ENCODE measurements at regions of chr5 and their contacts with region 1.

Region 1: GRCh38 chr5:135887351-135887864 is 8.2 kb downstream of the IL9 start:
- DNase-seq: peak; percentile 72
- ATAC-seq: peak; percentile 86
- H3K4me3 Mint-ChIP-seq: no peak overlapping the region
- H3K27ac Mint-ChIP-seq: no peak overlapping the region
- H3K4me1 Mint-ChIP-seq: peaks cover 6% of the 10 kb centered on the region
- H3K27me3 Mint-ChIP-seq: peaks cover 19% of the 10 kb centered on the region
- CTCF ChIP-seq: peak; percentile 78

Region 2: GRCh38 chr5:135913713-135914626 is 26.6 kb after region 1 on chr5:
- CTCF ChIA-PET with region 1: no interaction called
- POLR2A ChIA-PET with region 1: no interaction called
- intact Hi-C with region 1: no loop called
- DNase-seq: peak; percentile 20
- ATAC-seq: peak; percentile 65
- H3K4me3 Mint-ChIP-seq: no peak overlapping the region
- H3K27ac Mint-ChIP-seq: no peak overlapping the region
- H3K4me1 Mint-ChIP-seq: peaks cover 3% of the 10 kb centered on the region
- H3K27me3 Mint-ChIP-seq: peaks cover 47% of the 10 kb centered on the region
- CTCF ChIP-seq: no peak

Region 3: DNA sequence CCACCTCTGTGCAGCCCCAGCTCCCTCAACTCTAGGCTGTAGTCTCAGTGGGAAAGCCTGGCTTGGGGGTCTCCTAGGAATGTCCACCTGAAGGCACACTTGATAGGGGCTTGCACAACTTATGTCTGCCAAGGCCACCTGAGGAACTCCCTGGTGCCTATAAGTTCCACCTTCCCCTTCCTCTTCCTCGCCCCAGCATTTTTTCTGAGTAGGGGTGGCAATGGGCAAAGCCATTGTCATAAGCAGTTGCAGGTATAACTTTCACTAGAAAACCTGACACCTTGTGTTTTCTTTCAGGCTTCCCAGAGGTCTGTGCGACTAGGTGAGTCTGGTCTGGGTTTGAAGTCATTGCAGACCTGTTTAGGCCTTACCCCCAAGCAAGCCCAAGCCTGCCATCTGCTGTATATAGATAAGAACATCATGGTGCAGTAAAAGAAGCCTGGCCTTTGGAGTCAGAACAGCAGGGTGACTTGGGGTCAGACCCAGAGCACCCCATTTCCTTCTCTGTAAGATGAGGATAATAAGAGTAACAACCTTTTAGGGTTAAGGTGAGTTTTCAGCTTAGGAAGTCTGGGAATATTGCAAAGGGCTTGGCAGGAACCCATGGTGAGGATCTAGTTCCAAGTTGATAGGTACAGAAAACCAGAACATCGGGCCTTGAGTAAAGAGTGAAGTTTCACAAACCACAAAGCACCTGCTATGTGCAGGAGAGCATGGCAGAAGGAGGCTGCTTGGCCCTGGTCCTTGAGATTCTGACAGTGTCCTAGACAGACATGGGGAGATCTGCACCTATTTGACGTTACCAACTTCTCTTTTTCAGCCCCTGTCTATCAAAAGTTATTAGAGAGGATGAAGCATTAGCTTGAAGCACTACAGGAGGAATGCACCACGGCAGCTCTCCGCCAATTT is 175.2 kb after region 1 on chr5:
- CTCF ChIA-PET with region 1: no interaction called
- POLR2A ChIA-PET with region 1: no interaction called
- intact Hi-C with region 1: loop called (anchors 5 kb)
- DNase-seq: peak; percentile 34
- ATAC-seq: peak; percentile 70
- H3K4me3 Mint-ChIP-seq: no peak overlapping the region
- H3K27ac Mint-ChIP-seq: no peak overlapping the region
- H3K4me1 Mint-ChIP-seq: no peaks in the 10 kb centered on the region
- H3K27me3 Mint-ChIP-seq: no peaks in the 10 kb centered on the region
- CTCF ChIP-seq: no peak

Region 4: GRCh38 chr5:136080483-136081216 is 193.2 kb after region 1 on chr5:
- CTCF ChIA-PET with region 1: interaction called, 24 read pairs
- POLR2A ChIA-PET with region 1: no interaction called
- intact Hi-C with region 1: loop called (anchors 5 kb)
- DNase-seq: peak; percentile 87
- ATAC-seq: peak; percentile 95
- H3K4me3 Mint-ChIP-seq: peak overlapping the region; percentile 67
- H3K27ac Mint-ChIP-seq: peak overlapping the region; percentile 45
- H3K4me1 Mint-ChIP-seq: peaks cover 2% of the 10 kb centered on the region
- H3K27me3 Mint-ChIP-seq: peaks cover 39% of the 10 kb centered on the region
- CTCF ChIP-seq: no peak

Region 5: GRCh38 chr5:136174021-136174659 is 286.7 kb after region 1 on chr5:
- CTCF ChIA-PET with region 1: interaction called, 6 read pairs
- POLR2A ChIA-PET with region 1: no interaction called
- intact Hi-C with region 1: loop called (anchors 10 kb)
- DNase-seq: no peak
- ATAC-seq: no peak
- H3K4me3 Mint-ChIP-seq: no peak overlapping the region
- H3K27ac Mint-ChIP-seq: no peak overlapping the region
- H3K4me1 Mint-ChIP-seq: no peaks in the 10 kb centered on the region
- H3K27me3 Mint-ChIP-seq: no peaks in the 10 kb centered on the region
- CTCF ChIP-seq: peak; percentile 52

Region 6: GRCh38 chr5:136212252-136212721 is 324.9 kb after region 1 on chr5:
- CTCF ChIA-PET with region 1: interaction called, 5 read pairs
- POLR2A ChIA-PET with region 1: no interaction called
- intact Hi-C with region 1: loop called (anchors 1 kb)
- DNase-seq: peak; percentile 62
- ATAC-seq: no peak
- H3K4me3 Mint-ChIP-seq: no peak overlapping the region
- H3K27ac Mint-ChIP-seq: no peak overlapping the region
- H3K4me1 Mint-ChIP-seq: no peaks in the 10 kb centered on the region
- H3K27me3 Mint-ChIP-seq: peaks cover 17% of the 10 kb centered on the region
- CTCF ChIP-seq: peak; percentile 80